ENCODE measurements at regions of chr9 and their contacts with region 1.

Region 1: DNA sequence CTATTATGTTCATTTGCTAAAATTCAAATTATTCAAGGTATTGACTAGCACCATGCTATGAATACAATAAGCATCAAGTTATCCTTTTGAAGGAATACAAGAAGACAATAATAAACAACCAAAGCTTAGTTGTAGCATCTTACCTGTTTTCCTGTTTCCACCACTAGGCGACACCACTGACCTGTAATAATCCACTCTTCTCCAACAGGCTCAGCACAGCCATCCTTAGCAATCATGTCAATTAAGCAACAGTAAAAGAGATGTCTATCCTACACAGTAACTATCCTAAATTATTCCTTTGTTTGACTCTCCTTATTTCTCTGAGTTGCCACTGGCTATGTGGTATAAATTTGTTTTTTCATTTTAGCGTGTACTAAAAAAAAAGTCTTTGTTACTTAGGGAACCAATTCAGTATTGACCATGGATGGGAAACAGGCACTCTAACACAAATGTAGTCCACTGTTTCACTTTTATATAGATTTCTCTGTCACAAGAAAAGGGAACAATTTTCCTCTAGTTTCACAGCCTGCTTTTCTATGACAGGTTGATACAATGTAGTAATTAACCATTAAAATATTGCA is 46.2 kb downstream of the PCA3 start:
- DNase-seq: peak; percentile 63
- H3K27ac ChIP-seq: no peak overlapping the region
- CTCF ChIP-seq: peak; percentile 83

Region 2: DNA sequence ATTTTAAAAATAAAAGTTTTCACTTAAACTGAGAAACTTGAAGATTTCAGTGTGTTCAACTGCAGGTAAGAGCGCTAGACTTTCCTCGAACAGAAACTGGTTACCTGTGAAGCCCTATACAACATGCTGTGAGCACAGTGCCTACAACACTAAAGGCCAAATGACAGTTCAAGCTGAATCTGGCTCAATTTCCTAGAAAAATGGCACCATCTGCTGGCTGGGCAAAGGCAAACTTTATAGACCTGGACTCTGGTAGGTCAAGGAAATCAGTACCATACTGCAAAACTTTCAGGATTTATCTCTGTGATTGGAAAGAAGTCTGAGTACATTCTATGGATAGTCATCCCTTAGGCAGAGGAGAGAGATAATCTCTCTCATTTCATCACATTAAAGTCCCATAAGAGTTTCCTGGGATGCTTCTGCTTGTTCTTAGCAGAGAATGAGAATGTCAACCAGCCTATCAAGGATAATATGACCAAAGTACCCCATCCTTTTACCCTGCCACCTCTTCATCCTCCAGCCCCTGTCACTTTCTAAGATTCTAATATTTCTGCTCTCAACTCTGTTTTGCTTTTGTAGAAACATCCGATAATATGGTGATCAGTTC is 177.2 kb after region 1 on chr9:
- CTCF ChIA-PET with region 1: interaction called, 39 read pairs
- POLR2A ChIA-PET with region 1: no interaction called
- DNase-seq: peak; percentile 46
- H3K27ac ChIP-seq: no peak overlapping the region
- CTCF ChIP-seq: no peak

Region 3: GRCh38 chr9:77156646-77157371 is 346.3 kb after region 1 on chr9:
- CTCF ChIA-PET with region 1: interaction called, 18 read pairs
- POLR2A ChIA-PET with region 1: no interaction called
- DNase-seq: no peak
- H3K27ac ChIP-seq: peak overlapping the region; percentile 75
- CTCF ChIP-seq: no peak